H1 (cell line): ENCODE measurements at regions of chr1 and their contacts with region 1.

Region 1: DNA sequence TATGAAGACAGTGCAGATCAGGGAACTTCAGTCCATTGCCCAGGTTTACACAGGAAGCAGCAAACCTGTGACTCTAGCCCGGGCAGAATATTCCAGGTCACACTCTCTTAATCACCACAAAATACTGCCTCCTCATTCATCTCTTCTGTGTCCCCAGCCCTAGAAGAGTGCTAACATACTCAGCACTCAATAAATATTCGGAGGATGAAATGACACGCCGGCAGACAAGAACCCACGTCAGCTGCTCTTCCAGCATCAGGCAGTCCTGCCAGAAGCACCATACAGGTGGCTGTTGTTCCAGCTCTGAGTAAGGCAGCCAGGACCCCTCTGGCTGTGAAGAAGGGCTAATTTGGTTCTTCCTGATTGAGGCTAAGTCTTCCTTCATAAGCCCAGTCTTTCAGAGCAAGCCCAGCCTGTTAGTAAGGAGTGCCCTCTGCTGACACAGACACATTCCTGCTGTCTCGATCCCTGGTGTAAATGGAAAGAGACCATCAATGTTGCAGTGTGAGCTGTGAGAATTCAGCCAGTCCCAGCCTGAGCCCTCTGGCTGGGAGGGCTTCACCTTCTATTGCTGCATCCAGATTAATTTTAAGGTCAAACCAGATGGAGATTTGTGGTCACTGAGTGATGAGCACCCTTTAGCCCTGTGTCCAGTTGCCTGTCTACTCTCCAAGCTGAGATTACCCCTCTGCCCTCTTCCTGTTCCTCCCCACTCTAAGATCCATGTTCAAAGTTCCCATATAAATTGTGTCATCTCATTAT is 45.0 kb upstream of the KIRREL1 start:
- DNase-seq: peak in 1 of 2 experiments; percentile 39
- H3K4me3 ChIP-seq: no peak overlapping the region
- H3K27ac ChIP-seq: no peak overlapping the region
- H3K4me1 ChIP-seq: no peaks in the 10 kb centered on the region
- H3K27me3 ChIP-seq: no peaks in the 10 kb centered on the region
- CTCF ChIP-seq: peak; percentile 65 to 96 (median 91)
- EP300 ChIP-seq: no peak
- POLR2A ChIP-seq: no peak
- RAD21 ChIP-seq: peak; percentile 99

Region 2: DNA sequence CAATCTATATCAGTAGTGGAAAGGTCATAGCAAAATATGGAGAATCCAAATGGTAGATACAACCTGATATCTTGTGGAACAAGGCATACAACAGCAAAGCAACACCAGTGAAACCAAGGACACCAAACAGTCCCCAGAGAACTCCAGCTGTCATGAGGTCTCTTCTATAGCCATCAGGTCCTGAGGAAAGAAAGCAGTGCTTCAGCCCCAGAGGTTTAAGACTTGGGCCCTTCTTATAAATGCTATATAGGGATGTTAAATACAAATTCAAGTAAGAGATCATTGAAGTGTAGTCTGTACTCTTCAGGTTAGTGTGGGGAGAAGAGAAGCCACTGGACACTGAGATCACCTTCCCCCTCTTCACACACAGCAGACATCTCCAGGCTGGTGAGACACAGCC is 181.7 kb before region 1 on chr1:
- CTCF ChIA-PET with region 1: interaction called, 21 read pairs
- POLR2A ChIA-PET with region 1: no interaction called
- DNase-seq: no peak
- H3K4me3 ChIP-seq: no peak overlapping the region
- H3K27ac ChIP-seq: no peak overlapping the region
- H3K4me1 ChIP-seq: no peaks in the 10 kb centered on the region
- H3K27me3 ChIP-seq: no peaks in the 10 kb centered on the region; a peak in 1 of 7 replicates
- CTCF ChIP-seq: no peak
- EP300 ChIP-seq: no peak
- POLR2A ChIP-seq: no peak
- RAD21 ChIP-seq: no peak

Region 3: GRCh38 chr1:157870490-157870889 is 78.0 kb before region 1 on chr1:
- CTCF ChIA-PET with region 1: interaction called, 18 read pairs
- POLR2A ChIA-PET with region 1: no interaction called
- DNase-seq: no peak
- H3K4me3 ChIP-seq: no peak overlapping the region
- H3K27ac ChIP-seq: no peak overlapping the region
- H3K4me1 ChIP-seq: peaks cover 0 to 12% (median under 1%) of the 10 kb centered on the region in 4 experiments; a peak in 3 of 7 replicates
- H3K27me3 ChIP-seq: no peaks in the 10 kb centered on the region
- CTCF ChIP-seq: no peak
- EP300 ChIP-seq: no peak
- POLR2A ChIP-seq: no peak
- RAD21 ChIP-seq: no peak

Region 4: DNA sequence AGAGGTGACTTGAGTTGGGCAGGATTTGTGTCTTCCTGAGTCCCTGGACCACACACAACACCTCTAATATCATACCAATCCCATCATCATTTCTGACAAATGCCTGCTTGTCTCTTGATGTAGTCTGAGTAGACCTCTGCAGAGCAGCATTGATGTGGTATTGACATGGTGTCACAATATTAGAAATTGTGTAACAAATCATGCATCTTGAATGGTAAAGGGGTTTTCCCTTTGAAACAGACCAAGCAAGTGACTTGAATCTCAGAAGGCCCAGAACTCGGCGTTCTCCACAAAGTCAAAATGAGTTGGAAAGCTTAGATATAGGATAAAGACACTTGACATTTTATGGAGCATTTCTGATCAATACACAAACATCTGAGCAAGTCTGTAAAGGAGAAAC is 27.7 kb before region 1 on chr1:
- CTCF ChIA-PET with region 1: interaction called, 17 read pairs
- POLR2A ChIA-PET with region 1: no interaction called
- DNase-seq: no peak
- H3K4me3 ChIP-seq: no peak overlapping the region
- H3K27ac ChIP-seq: no peak overlapping the region
- H3K4me1 ChIP-seq: no peaks in the 10 kb centered on the region; a peak in 1 of 7 replicates
- H3K27me3 ChIP-seq: peaks cover 0 to 4% (median 0%) of the 10 kb centered on the region in 4 experiments; a peak in 1 of 7 replicates
- CTCF ChIP-seq: no peak
- EP300 ChIP-seq: no peak
- POLR2A ChIP-seq: no peak
- RAD21 ChIP-seq: no peak

Region 5: DNA sequence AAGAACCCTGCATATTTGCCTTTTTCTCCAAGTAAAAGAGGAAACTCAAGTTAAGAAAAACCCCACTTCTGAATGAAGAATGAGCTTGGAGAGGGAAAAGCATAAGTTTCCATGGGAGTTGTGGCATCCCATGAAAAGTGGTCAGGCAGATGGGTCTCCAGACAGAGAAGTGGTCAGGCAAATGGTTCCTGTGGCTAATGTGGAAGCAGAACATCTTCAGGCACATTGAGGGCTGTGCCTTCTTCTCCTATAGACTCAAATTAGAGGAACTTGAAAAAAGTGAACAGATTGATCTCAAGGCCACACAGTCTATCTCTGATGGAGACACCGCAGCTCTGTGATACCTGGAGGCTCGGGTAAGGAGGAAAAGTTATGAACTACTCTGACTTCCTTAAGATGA is 10.7 kb before region 1 on chr1:
- CTCF ChIA-PET with region 1: interaction called, 37 read pairs
- POLR2A ChIA-PET with region 1: interaction called, 3 read pairs
- DNase-seq: no peak
- H3K4me3 ChIP-seq: no peak overlapping the region
- H3K27ac ChIP-seq: no peak overlapping the region
- H3K4me1 ChIP-seq: no peaks in the 10 kb centered on the region
- H3K27me3 ChIP-seq: no peaks in the 10 kb centered on the region
- CTCF ChIP-seq: no peak
- EP300 ChIP-seq: no peak
- POLR2A ChIP-seq: no peak
- RAD21 ChIP-seq: no peak

Region 6: DNA sequence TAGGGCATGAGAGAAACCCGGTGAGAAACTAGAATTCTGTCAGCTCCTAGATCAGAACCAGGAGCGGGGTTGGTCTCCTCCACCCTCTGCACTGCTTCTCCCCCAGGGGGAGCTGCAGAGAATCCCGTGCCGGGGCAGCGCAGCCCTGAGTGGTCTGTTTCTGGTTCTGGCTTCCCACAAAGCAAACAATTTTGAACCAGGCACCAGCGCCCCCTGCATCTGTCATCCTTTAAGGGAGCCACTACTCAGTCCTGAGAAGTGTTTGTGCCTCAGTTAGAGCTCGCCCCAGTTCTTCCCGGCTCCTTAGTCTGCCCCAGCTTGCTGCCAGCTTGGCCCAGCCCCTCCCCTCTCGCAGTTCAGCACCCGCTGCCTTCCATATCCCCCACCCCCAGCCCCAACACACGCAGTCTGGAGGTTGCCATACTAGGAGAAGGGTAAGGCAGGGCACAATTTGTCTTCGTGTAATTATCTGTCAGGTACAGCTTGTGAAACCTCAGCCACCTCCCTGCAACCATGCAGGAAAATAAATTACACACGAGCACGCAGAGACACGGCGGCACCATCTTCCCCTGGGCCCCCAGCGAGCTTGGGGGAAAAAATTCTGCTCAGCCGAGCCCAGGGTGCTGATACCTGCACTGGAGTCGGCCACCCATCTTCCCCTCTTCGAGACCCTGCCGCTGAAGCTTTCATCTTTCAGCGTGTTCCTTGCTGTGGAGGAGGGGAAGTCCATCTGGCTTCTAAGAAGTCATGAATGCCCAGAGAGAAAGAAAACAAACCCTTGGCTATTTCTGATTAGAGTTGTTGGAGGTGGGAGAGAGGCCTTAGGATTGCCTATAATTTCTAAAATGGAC is 169.6 kb after region 1 on chr1:
- CTCF ChIA-PET with region 1: interaction called, 81 read pairs
- POLR2A ChIA-PET with region 1: no interaction called
- DNase-seq: peak; percentile 72 to 87
- H3K4me3 ChIP-seq: peak overlapping the region in 1 of 4 experiments; percentile 38; a peak in 1 of 8 replicates
- H3K27ac ChIP-seq: no peak overlapping the region
- H3K4me1 ChIP-seq: peaks cover 0 to 26% (median 13%) of the 10 kb centered on the region in 4 experiments; a peak in 6 of 7 replicates
- H3K27me3 ChIP-seq: peaks cover 0 to 4% (median 1%) of the 10 kb centered on the region in 4 experiments; a peak in 2 of 7 replicates
- CTCF ChIP-seq: peak; percentile 74 to 96 (median 83)
- EP300 ChIP-seq: no peak; a peak in 1 of 3 replicates
- POLR2A ChIP-seq: no peak
- RAD21 ChIP-seq: peak; percentile 56 to 69